CD4-positive, alpha-beta memory T cell (primary cell): ENCODE measurements at regions of chr11 and their contacts with region 1.

Region 1: DNA sequence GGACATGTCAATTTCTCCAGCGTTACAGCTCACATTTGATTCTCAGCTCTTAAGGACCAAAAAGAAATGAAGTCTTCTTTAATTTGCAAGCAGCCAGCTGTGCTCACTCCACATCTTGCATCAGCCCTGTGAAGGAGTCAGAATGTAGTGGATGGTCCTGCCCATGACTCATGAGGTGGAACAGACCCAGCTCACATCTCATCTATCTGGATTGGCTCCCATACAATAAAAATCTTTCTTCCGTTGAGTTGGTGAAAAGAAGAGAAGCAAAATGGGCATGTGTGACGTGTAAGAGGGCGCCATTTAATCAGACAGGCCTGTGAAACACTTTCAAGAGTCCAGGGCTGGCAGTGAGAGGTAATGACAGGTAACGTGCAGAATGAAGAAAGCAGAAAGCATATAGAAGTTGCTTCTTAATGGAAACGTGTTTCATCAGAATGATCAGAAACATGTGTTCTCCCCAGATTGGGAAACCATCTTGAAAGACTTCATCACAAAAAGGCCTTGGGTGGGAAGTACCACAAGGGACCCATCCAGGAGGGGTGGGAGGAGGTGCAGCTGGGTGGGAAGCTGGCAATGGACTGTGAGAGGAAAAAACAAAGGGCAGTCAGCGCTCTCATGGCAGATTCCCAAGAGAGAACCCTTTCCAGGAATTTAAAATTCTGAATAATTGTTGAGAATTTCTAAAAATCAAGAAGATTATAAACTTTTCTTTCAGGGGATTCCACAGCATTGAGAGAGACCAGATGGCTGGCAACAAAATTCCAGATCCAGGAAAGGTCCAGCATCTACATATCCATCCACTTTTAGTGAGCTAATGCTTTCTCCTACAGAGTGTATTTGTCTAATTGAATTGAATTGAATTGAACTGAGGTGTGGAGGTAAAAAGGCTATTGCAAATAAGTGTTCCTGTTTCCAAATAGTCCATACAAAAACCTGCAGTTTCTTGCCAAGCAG is 57.0 kb downstream of the ETS1 start:
- DNase-seq: no peak
- H3K4me3 ChIP-seq: no peak overlapping the region
- H3K4me3 Mint-ChIP-seq: no peak overlapping the region
- H3K27ac ChIP-seq: no peak overlapping the region
- H3K27ac Mint-ChIP-seq: no peak overlapping the region
- H3K4me1 ChIP-seq: peaks cover 37% of the 10 kb centered on the region
- H3K4me1 Mint-ChIP-seq: peaks cover 43 to 68% (median 49%) of the 10 kb centered on the region in 4 donors
- H3K27me3 ChIP-seq: no peaks in the 10 kb centered on the region
- H3K27me3 Mint-ChIP-seq: peaks cover 0 to 5% of the 10 kb centered on the region in 2 donors

Region 2: GRCh38 chr11:128568166-128568778 is 37.9 kb after region 1 on chr11:
- CTCF ChIA-PET with region 1: no interaction called
- POLR2A ChIA-PET with region 1: no interaction called
- intact Hi-C with region 1: loop called (anchors 5 kb)
- DNase-seq: no peak
- H3K4me3 ChIP-seq: no peak overlapping the region
- H3K4me3 Mint-ChIP-seq: no peak overlapping the region
- H3K27ac ChIP-seq: no peak overlapping the region
- H3K27ac Mint-ChIP-seq: peak overlapping the region in 2 of 7 donors; percentile 32 to 79
- H3K4me1 ChIP-seq: peaks cover 6% of the 10 kb centered on the region
- H3K4me1 Mint-ChIP-seq: peaks cover 1 to 12% (median 11%) of the 10 kb centered on the region in 4 donors
- H3K27me3 ChIP-seq: no peaks in the 10 kb centered on the region
- H3K27me3 Mint-ChIP-seq: no peaks in the 10 kb centered on the region